Activated CD4-positive, alpha-beta memory T cell treated with anti-CD3 and anti-CD28 coated beads for 36 hours (primary cell): ENCODE measurements at regions of chr19 and their contacts with region 1.

Region 1: DNA sequence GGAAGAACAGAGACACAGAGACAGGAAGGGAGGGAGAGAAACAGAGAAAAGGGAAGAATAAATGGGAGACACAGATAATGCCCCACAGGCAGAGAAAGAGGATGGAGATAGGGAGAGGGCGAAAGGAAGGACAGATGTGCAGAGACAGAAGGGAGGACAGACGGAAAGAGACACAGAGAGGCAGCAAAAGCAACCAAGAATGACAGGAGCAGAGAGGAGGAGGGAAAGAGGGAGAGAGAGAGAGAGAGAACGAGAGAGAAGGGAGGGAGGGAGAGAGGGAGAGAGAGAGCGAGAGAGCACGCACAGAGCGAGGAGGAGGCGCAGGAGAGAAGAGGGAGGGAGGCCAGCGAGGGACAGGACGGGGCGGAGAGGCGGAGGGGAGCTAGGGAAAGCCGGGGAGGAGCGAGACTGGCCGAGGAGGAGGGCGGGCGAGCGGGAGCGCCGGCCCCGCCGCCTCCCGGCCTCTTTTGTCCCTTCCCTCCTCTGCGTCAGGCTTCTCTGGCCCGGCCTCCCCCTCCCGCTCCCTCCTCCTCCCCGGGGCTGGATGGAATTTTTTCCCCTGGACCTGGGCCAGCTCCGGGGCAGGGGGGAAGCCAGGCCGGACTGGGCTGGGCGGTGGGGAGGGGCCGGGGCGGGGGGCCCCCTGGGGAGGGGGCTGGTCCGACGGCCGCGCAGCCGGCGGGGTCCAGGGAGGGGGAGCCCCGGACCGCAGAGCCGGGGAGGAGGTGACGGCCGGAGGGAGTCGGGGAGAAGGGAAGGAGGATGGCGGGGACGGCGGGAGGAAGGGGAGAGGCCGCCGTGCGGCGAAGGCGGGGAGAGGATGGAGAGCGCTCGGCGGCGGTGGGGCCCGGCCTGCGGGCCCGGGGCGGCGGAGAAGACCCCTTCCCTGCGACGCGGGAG is 4.2 kb upstream of the SPACA6 start:
- DNase-seq: peak; percentile 44
- H3K4me3 Mint-ChIP-seq: peak overlapping the region; percentile 65
- H3K27ac Mint-ChIP-seq: peak overlapping the region; percentile 40
- H3K4me1 Mint-ChIP-seq: peaks cover 11% of the 10 kb centered on the region
- H3K27me3 Mint-ChIP-seq: no peaks in the 10 kb centered on the region

Region 2: GRCh38 chr19:51621178-51621577 is 67.7 kb before region 1 on chr19:
- CTCF ChIA-PET with region 1: no interaction called
- POLR2A ChIA-PET with region 1: no interaction called
- intact Hi-C with region 1: no loop called
- DNase-seq: no peak
- H3K4me3 Mint-ChIP-seq: no peak overlapping the region
- H3K27ac Mint-ChIP-seq: no peak overlapping the region
- H3K4me1 Mint-ChIP-seq: no peaks in the 10 kb centered on the region
- H3K27me3 Mint-ChIP-seq: peaks cover 16% of the 10 kb centered on the region

Region 3: GRCh38 chr19:51668216-51668615 is 20.7 kb before region 1 on chr19:
- CTCF ChIA-PET with region 1: interaction called, 4 read pairs
- POLR2A ChIA-PET with region 1: no interaction called
- intact Hi-C with region 1: loop called (anchors 2 kb)
- DNase-seq: no peak
- H3K4me3 Mint-ChIP-seq: no peak overlapping the region
- H3K27ac Mint-ChIP-seq: no peak overlapping the region
- H3K4me1 Mint-ChIP-seq: peaks cover 12% of the 10 kb centered on the region
- H3K27me3 Mint-ChIP-seq: peaks cover 17% of the 10 kb centered on the region

Region 4: GRCh38 chr19:51703575-51704515 is 14.9 kb after region 1 on chr19:
- CTCF ChIA-PET with region 1: interaction called, 5 read pairs
- POLR2A ChIA-PET with region 1: interaction called, 6 read pairs
- intact Hi-C with region 1: loop called (anchors 1 kb)
- DNase-seq: peak; percentile 97
- H3K4me3 Mint-ChIP-seq: peak overlapping the region; percentile 92
- H3K27ac Mint-ChIP-seq: peak overlapping the region; percentile 89
- H3K4me1 Mint-ChIP-seq: peaks cover 32% of the 10 kb centered on the region
- H3K27me3 Mint-ChIP-seq: peaks cover 2% of the 10 kb centered on the region